Activated CD4-positive, alpha-beta T cell treated with anti-CD3 and anti-CD28 coated beads for 36 hours (primary cell): ENCODE measurements at regions of chr15 and their contacts with region 1.

Region 1: DNA sequence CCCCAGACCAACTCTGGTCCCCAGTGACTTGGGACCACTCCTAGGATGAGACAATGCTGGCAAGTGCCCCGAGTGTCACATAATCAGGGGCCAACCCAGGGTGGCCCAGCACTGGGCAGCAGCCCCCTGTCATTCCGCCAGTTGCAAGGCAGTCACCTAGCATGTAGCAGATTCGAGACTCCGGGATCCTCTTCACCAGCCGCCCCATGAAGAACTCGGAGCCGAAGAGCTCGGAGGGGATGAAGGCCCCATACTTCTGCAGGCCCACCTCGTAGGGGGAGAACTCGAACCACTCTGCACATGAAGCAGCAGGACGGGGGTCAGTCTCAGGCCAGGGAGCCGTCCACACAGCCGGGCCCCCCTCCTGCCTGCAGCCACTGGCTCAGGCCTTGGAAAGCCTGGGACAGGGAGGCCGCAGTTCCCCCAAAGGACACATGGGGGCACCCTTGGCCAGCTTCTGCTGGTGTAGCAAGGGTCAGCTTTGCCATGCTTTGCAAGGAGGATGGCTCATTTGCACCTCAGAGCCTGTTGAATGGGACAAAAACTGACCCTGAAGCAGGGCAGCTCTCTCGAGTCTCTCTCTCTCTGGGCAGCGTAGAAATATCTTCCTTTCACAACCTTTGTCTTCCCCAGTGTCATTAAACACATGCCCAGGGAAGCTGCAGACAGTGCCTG is 17.0 kb upstream of the EHD4 start:
- DNase-seq: peak; percentile 92
- ATAC-seq: peak; percentile 97
- H3K4me3 Mint-ChIP-seq: no peak overlapping the region
- H3K27ac Mint-ChIP-seq: no peak overlapping the region
- H3K4me1 Mint-ChIP-seq: no peaks in the 10 kb centered on the region
- H3K27me3 Mint-ChIP-seq: no peaks in the 10 kb centered on the region

Region 2: GRCh38 chr15:42033214-42033873 is 43.9 kb after region 1 on chr15:
- CTCF ChIA-PET with region 1: interaction called, 6 read pairs
- POLR2A ChIA-PET with region 1: no interaction called
- intact Hi-C with region 1: loop called in 1 of 2 experiments (anchors 2 kb)
- DNase-seq: peak; percentile 20
- ATAC-seq: peak; percentile 45
- H3K4me3 Mint-ChIP-seq: no peak overlapping the region
- H3K27ac Mint-ChIP-seq: peak overlapping the region; percentile 1
- H3K4me1 Mint-ChIP-seq: peaks cover 11% of the 10 kb centered on the region
- H3K27me3 Mint-ChIP-seq: no peaks in the 10 kb centered on the region

Region 3: DNA sequence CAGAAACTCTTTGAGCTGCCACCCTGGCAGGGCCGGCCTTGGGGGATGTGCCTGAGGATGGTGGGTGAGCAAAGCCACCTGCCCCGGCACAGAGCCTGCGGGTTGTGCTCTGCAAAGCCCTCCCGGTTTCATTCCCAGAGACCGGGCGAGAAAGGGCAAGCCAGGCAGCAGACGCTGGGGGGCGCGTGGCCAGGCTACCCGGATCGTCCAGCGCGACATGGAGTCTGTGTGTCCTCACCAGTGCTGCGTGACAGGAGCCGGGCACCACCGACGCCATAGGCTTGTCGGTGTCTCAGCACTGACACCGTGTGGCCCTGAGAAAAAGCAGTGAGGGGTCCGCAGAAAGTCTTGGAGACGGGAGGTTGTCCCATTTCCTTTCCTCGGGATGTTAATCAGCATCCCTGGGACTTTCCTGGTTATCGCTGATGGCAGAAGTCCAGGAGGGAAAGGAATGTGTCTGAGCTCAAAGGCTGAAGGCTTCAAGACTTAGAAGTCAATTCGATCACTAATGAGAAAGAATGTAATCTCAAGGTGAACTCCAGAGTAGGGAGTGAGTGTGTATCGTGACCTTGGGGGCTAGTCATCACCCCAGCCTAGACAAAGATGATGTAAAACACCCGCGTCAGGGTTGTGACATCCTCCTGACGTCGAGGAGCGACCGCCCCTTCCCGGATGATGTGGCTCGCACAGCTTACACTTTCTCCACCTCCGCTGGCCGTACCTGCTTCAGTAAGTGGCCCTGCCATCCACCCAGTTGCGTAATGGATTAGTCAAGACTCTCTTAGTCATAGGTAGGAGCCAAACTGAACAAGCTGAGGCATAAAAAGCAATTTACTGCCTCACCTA is 67.8 kb after region 1 on chr15:
- CTCF ChIA-PET with region 1: interaction called, 42 read pairs
- POLR2A ChIA-PET with region 1: interaction called, 3 read pairs
- intact Hi-C with region 1: loop called (anchors 1 kb)
- DNase-seq: peak; percentile 83
- ATAC-seq: peak; percentile 86
- H3K4me3 Mint-ChIP-seq: peak overlapping the region; percentile 49
- H3K27ac Mint-ChIP-seq: peak overlapping the region; percentile 52
- H3K4me1 Mint-ChIP-seq: peaks cover 7% of the 10 kb centered on the region
- H3K27me3 Mint-ChIP-seq: peaks cover 9% of the 10 kb centered on the region

Region 4: GRCh38 chr15:42084460-42085235 is 95.3 kb after region 1 on chr15:
- CTCF ChIA-PET with region 1: interaction called, 28 read pairs
- POLR2A ChIA-PET with region 1: no interaction called
- intact Hi-C with region 1: loop called (anchors 1 kb)
- DNase-seq: peak; percentile 70
- ATAC-seq: peak; percentile 85
- H3K4me3 Mint-ChIP-seq: no peak overlapping the region
- H3K27ac Mint-ChIP-seq: no peak overlapping the region
- H3K4me1 Mint-ChIP-seq: peaks cover 3% of the 10 kb centered on the region
- H3K27me3 Mint-ChIP-seq: peaks cover 2% of the 10 kb centered on the region

Region 5: DNA sequence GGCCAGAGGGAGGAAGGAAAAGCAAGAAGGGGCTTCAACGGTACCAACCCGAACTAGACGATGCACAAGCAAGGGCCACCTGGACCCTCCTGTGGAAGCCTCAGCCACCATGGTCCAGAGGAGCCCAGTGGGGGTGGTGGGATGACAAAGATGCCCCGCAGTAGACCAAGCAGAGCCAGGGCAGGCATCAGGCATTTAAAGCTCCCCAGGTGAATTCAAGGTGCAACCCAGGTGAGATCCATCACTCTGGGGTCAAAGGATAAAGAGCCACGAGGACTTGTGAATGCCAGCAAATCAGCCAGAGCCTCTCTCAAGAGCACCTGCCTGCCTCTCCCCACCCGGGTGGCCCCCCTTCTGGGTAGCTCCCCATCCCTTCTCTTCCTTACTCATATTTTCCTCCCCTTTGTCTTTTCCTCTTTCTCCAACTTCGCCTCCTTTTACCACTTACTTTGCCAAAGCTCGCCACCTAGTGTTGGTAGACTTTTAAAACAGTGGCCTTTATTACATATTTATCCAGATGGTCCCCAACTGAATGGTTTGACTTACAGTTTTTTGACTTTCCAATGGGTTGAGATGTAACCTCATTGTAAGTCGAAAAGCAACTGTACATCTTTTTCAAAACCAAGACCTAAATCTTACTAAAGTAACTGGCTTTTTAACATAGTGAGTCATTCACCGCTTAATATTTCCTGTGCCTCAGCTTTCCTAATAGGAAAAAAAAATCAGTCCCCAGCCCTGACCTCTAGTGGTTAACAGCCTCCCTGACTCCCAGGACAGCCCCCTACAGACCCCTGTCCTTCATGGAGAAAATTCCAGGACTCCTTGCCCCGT is 148.2 kb after region 1 on chr15:
- CTCF ChIA-PET with region 1: interaction called, 14 read pairs
- POLR2A ChIA-PET with region 1: no interaction called
- intact Hi-C with region 1: loop called (anchors 1 to 2 kb)
- DNase-seq: peak; percentile 35
- ATAC-seq: no peak
- H3K4me3 Mint-ChIP-seq: no peak overlapping the region
- H3K27ac Mint-ChIP-seq: no peak overlapping the region
- H3K4me1 Mint-ChIP-seq: no peaks in the 10 kb centered on the region
- H3K27me3 Mint-ChIP-seq: no peaks in the 10 kb centered on the region